OCI-LY7 (cell line): ENCODE measurements at regions of chr7 and their contacts with region 1.

Region 1: GRCh38 chr7:107201795-107202450 is 33.1 kb downstream of the HBP1 start:
- DNase-seq: peak; percentile 61
- H3K4me3 ChIP-seq: no peak overlapping the region
- H3K27ac ChIP-seq: no peak overlapping the region
- H3K4me1 ChIP-seq: no peaks in the 10 kb centered on the region
- CTCF ChIP-seq: peak; percentile 84

Region 2: DNA sequence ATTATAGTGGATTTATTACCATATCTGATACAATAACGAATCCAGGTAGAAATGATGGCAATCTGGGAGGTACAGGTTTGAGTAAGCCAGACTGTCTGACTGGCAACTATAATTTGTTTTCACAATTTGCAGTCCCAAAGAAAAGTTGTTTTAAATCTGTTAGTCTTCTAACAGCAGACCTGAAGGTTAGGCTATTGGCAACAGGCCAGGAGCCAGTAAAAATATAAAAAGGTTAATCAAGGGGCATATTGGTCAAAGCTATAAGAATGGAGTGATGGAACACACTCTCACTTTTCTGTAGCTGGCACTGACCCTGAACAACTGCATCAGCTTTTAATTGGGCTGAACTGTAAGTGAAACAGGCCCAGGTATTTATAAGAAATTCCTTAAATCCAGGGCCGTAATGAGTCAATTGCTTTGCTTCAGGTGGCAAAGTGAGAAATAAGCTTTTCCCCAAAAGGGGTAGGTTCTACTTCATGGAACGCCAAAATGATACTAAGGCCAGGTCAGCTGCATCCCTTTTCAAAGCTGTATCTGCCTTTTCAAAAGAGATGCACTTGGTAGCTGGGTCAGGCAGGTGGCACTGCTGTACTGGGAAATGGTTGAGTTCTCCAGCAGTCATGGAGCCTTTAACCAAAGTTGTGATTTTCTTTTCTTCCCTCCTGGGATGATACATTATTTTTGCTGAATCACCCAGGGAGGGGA is 261.0 kb after region 1 on chr7:
- CTCF ChIA-PET with region 1: no interaction called
- POLR2A ChIA-PET with region 1: interaction called, 3 read pairs
- intact Hi-C with region 1: loop called (anchors 5 kb)
- DNase-seq: peak; percentile 52
- H3K4me3 ChIP-seq: no peak overlapping the region
- H3K27ac ChIP-seq: no peak overlapping the region
- H3K4me1 ChIP-seq: no peaks in the 10 kb centered on the region
- CTCF ChIP-seq: peak; percentile 82

Region 3: GRCh38 chr7:107501593-107501992 is 299.7 kb after region 1 on chr7:
- CTCF ChIA-PET with region 1: no interaction called
- POLR2A ChIA-PET with region 1: no interaction called
- intact Hi-C with region 1: loop called (anchors 1 kb)
- DNase-seq: peak; percentile 41
- H3K4me3 ChIP-seq: no peak overlapping the region
- H3K27ac ChIP-seq: no peak overlapping the region
- H3K4me1 ChIP-seq: no peaks in the 10 kb centered on the region
- CTCF ChIP-seq: peak; percentile 84